Activated CD8-positive, alpha-beta memory T cell treated with anti-CD3 and anti-CD28 coated beads, Interleukin-2, amount 10 ng/mL, durations not matched to agents 7 days and 5 days (primary cell): ENCODE measurements at regions of chr1 and their contacts with region 1.

Region 1: DNA sequence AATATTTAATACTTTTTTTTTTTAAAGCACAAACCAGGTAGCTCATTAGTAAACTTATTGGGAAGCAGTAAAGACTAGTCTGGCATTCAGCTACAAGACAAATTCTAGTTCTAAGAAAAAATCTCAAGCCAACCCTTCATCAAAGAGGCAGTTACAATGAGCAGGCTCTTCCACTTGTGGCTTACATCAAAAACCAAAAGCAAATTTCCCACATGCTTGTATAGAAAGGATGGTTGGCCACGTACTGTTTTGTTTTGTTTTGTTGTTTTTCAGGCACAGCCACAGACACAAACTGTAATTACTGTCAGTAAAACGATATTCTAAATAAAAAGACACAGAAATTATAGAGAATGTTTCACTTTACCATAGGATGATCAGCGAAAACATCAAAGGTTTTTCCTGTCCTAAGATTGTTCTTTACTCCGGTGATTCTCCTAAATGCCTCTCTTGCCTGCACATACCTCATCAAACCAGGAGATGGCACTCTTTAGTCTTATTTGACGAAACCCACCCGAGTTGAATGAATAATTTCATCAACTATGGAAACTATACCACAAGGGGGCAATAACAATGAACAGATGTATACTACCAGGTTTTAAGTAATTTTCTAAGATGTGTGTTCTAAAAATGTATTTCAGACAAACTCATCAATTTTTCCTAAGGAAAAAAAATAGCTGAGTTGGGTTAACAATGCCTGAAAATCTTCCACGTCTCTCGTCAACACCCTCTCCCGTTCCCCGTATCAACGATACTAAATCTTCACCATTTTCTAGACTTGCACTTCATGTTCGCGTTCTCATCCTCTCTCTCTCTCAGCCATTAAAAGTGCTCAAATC is 26.9 kb downstream of the RPL5 start:
- DNase-seq: peak; percentile 72
- ATAC-seq: peak; percentile 89
- H3K4me3 Mint-ChIP-seq: peak overlapping the region; percentile 23
- H3K27ac Mint-ChIP-seq: peak overlapping the region; percentile 10
- H3K4me1 Mint-ChIP-seq: peaks cover 17% of the 10 kb centered on the region
- H3K27me3 Mint-ChIP-seq: no peaks in the 10 kb centered on the region

Region 2: DNA sequence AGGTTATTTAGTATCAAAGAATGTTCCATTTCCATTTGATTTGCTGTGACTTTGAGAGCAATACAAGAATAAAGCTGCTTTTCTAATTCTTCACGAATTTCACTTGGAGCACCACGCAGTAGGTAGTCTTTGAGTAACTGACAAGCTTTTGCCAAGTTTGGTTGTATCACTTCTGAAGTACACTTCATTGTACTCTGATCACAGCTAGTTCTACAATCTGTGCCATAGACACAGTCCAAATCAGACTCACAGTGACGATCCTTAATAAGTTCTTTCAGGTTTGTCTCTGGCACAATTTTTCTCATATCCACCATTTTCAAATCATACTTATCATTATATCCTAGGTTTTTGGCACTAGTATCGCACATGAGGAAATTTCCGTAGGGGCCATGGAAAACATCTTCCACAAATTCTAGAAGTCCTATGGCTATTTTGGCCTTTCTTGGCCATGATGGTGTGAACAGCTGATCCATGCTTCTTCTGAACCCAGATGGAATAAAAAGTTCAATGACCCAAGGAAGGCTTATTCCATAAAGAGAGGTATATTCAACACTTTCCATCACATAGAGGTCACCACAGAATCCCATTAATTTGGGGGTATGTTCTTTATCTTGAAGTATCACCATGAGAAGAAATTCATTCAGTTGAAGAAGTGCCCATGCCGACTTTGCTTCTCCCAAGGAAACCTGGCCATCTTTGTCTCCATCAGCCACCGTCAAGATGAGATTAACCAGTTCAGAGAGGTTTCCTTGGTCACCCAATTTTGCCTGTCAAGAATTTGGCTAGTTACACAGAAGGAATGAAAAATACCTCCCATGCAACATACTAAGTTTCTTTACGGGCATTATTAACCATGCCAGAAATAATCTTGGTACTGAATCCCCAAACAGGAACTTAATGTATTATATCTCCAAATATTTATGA is 15.1 kb before region 1 on chr1:
- CTCF ChIA-PET with region 1: interaction called, 13 read pairs
- DNase-seq: no peak
- ATAC-seq: no peak
- H3K4me3 Mint-ChIP-seq: no peak overlapping the region
- H3K27ac Mint-ChIP-seq: no peak overlapping the region
- H3K4me1 Mint-ChIP-seq: peaks cover 20% of the 10 kb centered on the region
- H3K27me3 Mint-ChIP-seq: no peaks in the 10 kb centered on the region

Region 3: GRCh38 chr1:92877792-92878191 is 19.0 kb after region 1 on chr1:
- CTCF ChIA-PET with region 1: interaction called, 18 read pairs
- DNase-seq: no peak
- ATAC-seq: peak; percentile 63
- H3K4me3 Mint-ChIP-seq: peak overlapping the region; percentile 56
- H3K27ac Mint-ChIP-seq: peak overlapping the region; percentile 68
- H3K4me1 Mint-ChIP-seq: peaks cover 27% of the 10 kb centered on the region
- H3K27me3 Mint-ChIP-seq: no peaks in the 10 kb centered on the region

Region 4: DNA sequence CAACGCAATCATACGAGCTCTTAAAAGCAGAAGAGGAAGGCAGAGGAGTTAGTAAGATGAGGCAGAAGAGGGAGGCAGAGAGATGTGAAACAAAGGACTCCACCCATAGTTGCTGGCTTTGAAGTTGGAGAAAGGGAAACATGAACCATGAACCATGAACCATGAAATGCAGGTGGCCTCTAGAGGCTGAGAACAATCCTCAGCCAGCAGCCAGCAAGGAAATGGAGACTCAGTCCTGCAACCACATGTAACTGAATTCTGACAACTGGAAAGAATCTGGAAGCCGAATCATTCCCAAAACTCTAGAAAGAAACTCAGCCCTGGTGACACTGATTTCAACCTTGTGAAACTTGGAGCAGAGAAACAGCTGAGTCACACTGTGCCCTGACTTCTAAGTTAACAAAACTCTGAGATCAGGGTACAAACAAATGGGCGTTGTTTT is 92.4 kb after region 1 on chr1:
- CTCF ChIA-PET with region 1: interaction called, 160 read pairs
- DNase-seq: no peak
- ATAC-seq: peak; percentile 40
- H3K4me3 Mint-ChIP-seq: no peak overlapping the region
- H3K27ac Mint-ChIP-seq: no peak overlapping the region
- H3K4me1 Mint-ChIP-seq: peaks cover 36% of the 10 kb centered on the region
- H3K27me3 Mint-ChIP-seq: no peaks in the 10 kb centered on the region

Region 5: DNA sequence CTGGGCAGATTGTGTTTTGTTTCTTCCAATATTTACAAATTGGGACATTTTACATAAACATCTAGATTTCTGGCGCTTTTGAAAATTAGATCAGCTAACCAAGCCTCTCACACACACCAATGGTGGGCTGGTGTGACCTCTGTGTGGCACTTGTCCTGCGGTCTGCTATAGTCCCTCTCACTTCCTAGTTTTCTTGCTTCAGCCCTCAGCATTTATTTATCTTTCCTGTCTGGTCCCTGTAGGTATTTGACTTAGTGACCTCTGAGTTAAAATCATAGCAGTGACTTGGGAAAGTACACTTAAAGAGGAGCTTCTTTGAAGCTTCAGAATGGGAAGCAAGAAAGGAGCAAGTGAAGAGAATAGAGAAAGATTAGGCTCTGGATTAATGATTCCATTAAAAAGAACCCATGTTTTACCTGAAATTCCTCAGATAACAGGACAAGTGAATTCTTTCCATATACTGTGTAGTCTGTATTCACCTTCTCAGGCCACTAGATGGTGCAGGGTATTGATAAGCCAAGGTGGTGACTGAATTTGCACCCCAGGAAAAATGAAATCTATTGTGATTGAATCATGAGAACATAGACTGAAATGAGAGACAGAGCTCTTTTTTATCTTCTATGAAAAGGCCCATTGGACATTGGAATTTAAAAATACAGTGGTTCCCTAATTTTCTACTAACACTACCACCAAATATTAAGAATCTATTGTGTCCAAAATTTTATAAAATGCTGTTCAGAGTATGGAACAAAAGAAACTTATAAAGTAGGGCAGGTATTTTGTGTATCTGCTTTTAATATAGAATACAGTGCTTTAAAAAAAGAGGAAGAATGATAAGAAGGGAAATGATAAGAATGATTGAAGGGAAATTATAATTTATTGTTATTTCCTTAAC is 109.6 kb after region 1 on chr1:
- CTCF ChIA-PET with region 1: interaction called, 160 read pairs
- DNase-seq: no peak
- ATAC-seq: peak; percentile 74
- H3K4me3 Mint-ChIP-seq: no peak overlapping the region
- H3K27ac Mint-ChIP-seq: no peak overlapping the region
- H3K4me1 Mint-ChIP-seq: peaks cover 21% of the 10 kb centered on the region
- H3K27me3 Mint-ChIP-seq: no peaks in the 10 kb centered on the region